GM13977 (cell line): ENCODE measurements at regions of chr3 and their contacts with region 1.

Region 1: GRCh38 chr3:47527952-47528718 is 14.6 kb upstream of the ELP6 start:
- DNase-seq: no peak
- CTCF ChIP-seq: no peak

Region 2: GRCh38 chr3:47646362-47646761 is 118.2 kb after region 1 on chr3:
- in situ Hi-C with region 1: no loop called
- DNase-seq: no peak
- CTCF ChIP-seq: no peak

Region 3: DNA sequence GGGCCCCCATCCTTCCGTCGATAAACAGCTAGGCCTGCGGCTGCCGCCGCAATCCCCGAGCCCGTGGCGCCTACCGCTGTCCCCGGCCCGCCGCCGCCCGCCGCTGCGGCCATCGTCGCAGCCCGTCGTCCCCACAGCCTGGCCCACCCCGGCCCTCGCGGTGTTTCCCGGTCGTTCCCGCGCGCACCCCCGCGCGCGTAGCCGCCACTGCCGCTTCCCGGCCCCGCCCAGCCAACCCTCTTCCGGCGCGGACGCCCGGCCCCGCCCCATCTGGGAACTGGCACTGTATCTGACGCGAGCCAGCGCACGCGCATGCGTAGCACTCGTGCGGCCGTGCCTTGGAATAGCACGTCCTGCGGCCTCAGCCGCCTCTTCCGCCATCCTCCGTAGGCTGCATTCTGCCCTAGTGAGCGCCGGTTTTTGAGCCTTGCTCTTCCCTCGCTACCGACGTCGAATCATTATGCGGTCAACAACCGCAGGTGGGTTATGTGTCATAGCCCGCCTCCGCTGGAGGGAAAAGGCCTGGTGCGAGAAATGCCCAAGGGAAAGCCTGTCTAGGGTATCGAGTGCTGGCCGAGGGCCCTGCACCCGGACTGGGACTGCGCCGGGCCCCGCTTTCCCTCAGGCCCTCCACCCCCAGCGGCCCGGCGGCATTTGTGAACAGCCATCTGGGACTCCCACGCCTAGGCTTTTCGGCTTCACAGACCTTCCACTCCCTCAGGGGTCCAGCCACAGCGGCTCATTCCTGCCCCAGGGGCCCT is 253.7 kb after region 1 on chr3 and contains the start of gene SMARCC1:
- in situ Hi-C with region 1: loop called (anchors 5 kb)
- DNase-seq: peak; percentile 97
- CTCF ChIP-seq: no peak